Right ventricle myocardium inferior (tissue), 1 donor: ENCODE measurements at regions of chr5 and their contacts with region 1.

Region 1: GRCh38 chr5:160169326-160169725 is 50.1 kb upstream of the PWWP2A start:
- DNase-seq: no peak
- ATAC-seq: peak; percentile 53

Region 2: GRCh38 chr5:160119142-160119904 is 50.0 kb before region 1 on chr5 and contains the start of gene PWWP2A:
- intact Hi-C with region 1: loop called (anchors 2 kb)
- DNase-seq: peak; percentile 99
- ATAC-seq: peak; percentile 98
- total RNA-seq, gene PWWP2A: 13.2 TPM